SK-N-SH (cell line): ENCODE measurements at regions of chr17 and their contacts with region 1.

Region 1: GRCh38 chr17:43316522-43317142 is 82.2 kb upstream of the ARL4D start:
- DNase-seq: no peak
- H3K4me3 ChIP-seq: no peak overlapping the region
- H3K27ac ChIP-seq: no peak overlapping the region
- H3K4me1 ChIP-seq: no peaks in the 10 kb centered on the region; a peak in 1 of 4 replicates
- H3K27me3 ChIP-seq: no peaks in the 10 kb centered on the region
- CTCF ChIP-seq: no peak
- EP300 ChIP-seq: no peak
- RAD21 ChIP-seq: no peak

Region 2: DNA sequence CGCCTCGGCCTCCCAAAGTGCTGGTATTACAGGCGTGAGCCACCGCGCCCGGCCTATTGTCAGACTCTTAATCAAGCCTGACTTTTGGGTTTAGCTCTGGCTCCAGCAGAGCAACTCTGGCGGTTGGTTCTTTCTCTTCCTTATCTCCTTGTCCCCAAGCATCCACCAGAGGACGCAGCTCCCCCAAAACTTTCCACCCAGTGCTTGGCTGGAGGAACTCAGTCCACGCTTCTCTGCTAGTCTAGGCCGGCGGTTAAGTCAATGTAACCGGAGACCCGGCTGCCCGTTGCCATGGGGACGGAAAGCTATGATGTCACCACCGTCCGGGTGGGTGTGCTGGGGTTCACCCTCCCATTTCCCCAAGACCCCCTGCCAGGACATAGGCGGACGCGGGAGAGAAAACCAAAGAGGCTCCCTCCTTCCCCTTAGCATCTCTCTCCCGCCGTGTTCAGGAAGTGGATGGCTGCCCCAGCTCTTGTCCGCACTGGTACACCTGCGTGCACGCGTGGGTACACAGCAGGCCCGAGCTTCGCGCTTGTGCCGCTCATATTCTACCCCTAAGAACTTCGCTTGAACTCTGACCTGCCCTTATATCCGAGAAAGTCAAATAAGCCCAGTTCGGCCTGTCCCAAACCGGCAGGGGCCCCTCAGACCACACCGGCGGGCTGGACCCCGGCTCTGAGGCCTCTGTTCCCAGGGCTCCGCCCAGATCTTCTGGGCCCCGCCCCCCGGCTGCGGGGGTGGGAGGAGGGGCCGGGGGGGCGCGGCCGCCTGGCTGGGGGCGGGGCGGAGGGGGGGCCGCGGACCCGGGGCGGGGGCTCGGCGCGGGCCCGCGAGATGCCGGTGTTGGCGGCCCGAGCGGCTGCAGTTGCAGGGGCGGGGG is 292.0 kb before region 1 on chr17 and contains the start of gene RND2:
- CTCF ChIA-PET with region 1: interaction called, 7 read pairs
- POLR2A ChIA-PET with region 1: interaction called, 11 read pairs
- DNase-seq: peak; percentile 98
- H3K4me3 ChIP-seq: peak within 1 kb of the TSS; percentile 63 to 81
- H3K27ac ChIP-seq: peak within 1 kb of the TSS; percentile 68 to 86
- H3K4me1 ChIP-seq: peaks cover 0 to 13% of the 10 kb centered on the region in 2 experiments; a peak in 1 of 4 replicates
- H3K27me3 ChIP-seq: no peaks in the 10 kb centered on the region
- CTCF ChIP-seq: peak; percentile 81
- EP300 ChIP-seq: no peak
- RAD21 ChIP-seq: peak; percentile 85
- polyA plus RNA-seq, gene RND2: 8.9 and 10.5 TPM in 2 replicates

Region 3: GRCh38 chr17:43170766-43171585 is 145.7 kb before region 1 on chr17 and contains the start of gene NBR1:
- CTCF ChIA-PET with region 1: no interaction called
- POLR2A ChIA-PET with region 1: interaction called, 16 read pairs
- DNase-seq: peak; percentile 90
- H3K4me3 ChIP-seq: peak within 1 kb of the TSS; percentile 78 to 89
- H3K27ac ChIP-seq: peak within 1 kb of the TSS; percentile 96 to 97
- H3K4me1 ChIP-seq: peaks cover 0 to 4% of the 10 kb centered on the region in 2 experiments; a peak in 2 of 4 replicates
- H3K27me3 ChIP-seq: no peaks in the 10 kb centered on the region
- CTCF ChIP-seq: no peak; the same call in 1 of the 2 replicates
- EP300 ChIP-seq: no peak
- RAD21 ChIP-seq: no peak
- polyA plus RNA-seq, gene NBR1: 41.4 and 62.5 TPM in 2 replicates

Region 4: GRCh38 chr17:43175816-43176570 is 140.6 kb before region 1 on chr17:
- CTCF ChIA-PET with region 1: no interaction called
- POLR2A ChIA-PET with region 1: interaction called, 16 read pairs
- DNase-seq: no peak
- H3K4me3 ChIP-seq: no peak overlapping the region
- H3K27ac ChIP-seq: no peak overlapping the region
- H3K4me1 ChIP-seq: peaks cover 0 to 4% of the 10 kb centered on the region in 2 experiments; a peak in 2 of 4 replicates
- H3K27me3 ChIP-seq: no peaks in the 10 kb centered on the region
- CTCF ChIP-seq: no peak
- EP300 ChIP-seq: no peak
- RAD21 ChIP-seq: no peak

Region 5: GRCh38 chr17:43367737-43368242 is 51.2 kb after region 1 on chr17:
- CTCF ChIA-PET with region 1: interaction called, 3 read pairs
- POLR2A ChIA-PET with region 1: interaction called, 40 read pairs
- DNase-seq: peak; percentile 67
- H3K4me3 ChIP-seq: peak overlapping the region in 1 of 2 experiments; percentile 36; a peak in 2 of 4 replicates
- H3K27ac ChIP-seq: peak overlapping the region; percentile 92 to 95
- H3K4me1 ChIP-seq: peaks cover 7 to 11% of the 10 kb centered on the region in 2 experiments; a peak in 3 of 4 replicates
- H3K27me3 ChIP-seq: no peaks in the 10 kb centered on the region
- CTCF ChIP-seq: no peak
- EP300 ChIP-seq: peak; percentile 22 to 31; a peak in 1 of 4 replicates
- RAD21 ChIP-seq: no peak; the same call in 1 of the 2 replicates